CD8-positive, alpha-beta T cell (primary cell): ENCODE measurements at regions of chr5 and their contacts with region 1.

Region 1: GRCh38 chr5:36882250-36882649 is 5.7 kb downstream of the NIPBL start:
- DNase-seq: no peak
- ATAC-seq: no peak
- H3K4me3 ChIP-seq: no peak overlapping the region
- H3K4me3 Mint-ChIP-seq: peak overlapping the region; percentile 19
- H3K27ac ChIP-seq: no peak overlapping the region
- H3K27ac Mint-ChIP-seq: no peak overlapping the region
- H3K4me1 ChIP-seq: peaks cover 69% of the 10 kb centered on the region
- H3K4me1 Mint-ChIP-seq: peaks cover 75% of the 10 kb centered on the region
- H3K27me3 ChIP-seq: no peaks in the 10 kb centered on the region
- H3K27me3 Mint-ChIP-seq: no peaks in the 10 kb centered on the region
- CTCF ChIP-seq: no peak

Region 2: DNA sequence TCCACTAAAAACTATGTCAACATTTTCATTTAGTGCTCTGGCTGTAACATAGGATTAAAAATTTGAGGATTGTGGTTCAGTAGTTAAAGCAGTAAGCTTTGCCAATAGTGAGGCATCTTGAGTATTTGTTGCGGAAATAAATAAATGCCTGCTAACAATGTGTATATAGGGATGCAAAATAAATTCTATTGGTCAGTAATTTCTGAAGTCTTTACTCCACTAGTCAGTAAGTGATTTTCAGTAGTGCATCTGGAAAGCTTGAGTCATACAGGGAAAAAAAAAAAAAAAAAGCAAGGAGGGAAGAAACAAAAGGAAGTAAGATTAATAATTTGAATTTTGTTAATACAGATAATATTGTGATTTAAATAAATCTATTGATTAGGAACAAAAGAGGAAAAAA is 15.4 kb after region 1 on chr5:
- CTCF ChIA-PET with region 1: no interaction called
- POLR2A ChIA-PET with region 1: interaction called, 4 read pairs
- intact Hi-C with region 1: loop called in 1 of 2 experiments (anchors 2 kb)
- DNase-seq: no peak
- ATAC-seq: no peak
- H3K4me3 ChIP-seq: no peak overlapping the region
- H3K4me3 Mint-ChIP-seq: no peak overlapping the region
- H3K27ac ChIP-seq: no peak overlapping the region
- H3K27ac Mint-ChIP-seq: no peak overlapping the region
- H3K4me1 ChIP-seq: peaks cover 15% of the 10 kb centered on the region
- H3K4me1 Mint-ChIP-seq: peaks cover 72% of the 10 kb centered on the region
- H3K27me3 ChIP-seq: no peaks in the 10 kb centered on the region
- H3K27me3 Mint-ChIP-seq: no peaks in the 10 kb centered on the region
- CTCF ChIP-seq: no peak

Region 3: GRCh38 chr5:36928947-36929346 is 46.7 kb after region 1 on chr5:
- CTCF ChIA-PET with region 1: no interaction called
- POLR2A ChIA-PET with region 1: no interaction called
- intact Hi-C with region 1: loop called in 1 of 2 experiments (anchors 5 kb)
- DNase-seq: peak in 2 of 9 experiments; percentile 6 to 18
- ATAC-seq: no peak
- H3K4me3 ChIP-seq: no peak overlapping the region
- H3K4me3 Mint-ChIP-seq: no peak overlapping the region
- H3K27ac ChIP-seq: no peak overlapping the region
- H3K27ac Mint-ChIP-seq: no peak overlapping the region
- H3K4me1 ChIP-seq: peaks cover 18% of the 10 kb centered on the region
- H3K4me1 Mint-ChIP-seq: peaks cover 73% of the 10 kb centered on the region
- H3K27me3 ChIP-seq: no peaks in the 10 kb centered on the region
- H3K27me3 Mint-ChIP-seq: no peaks in the 10 kb centered on the region
- CTCF ChIP-seq: no peak

Region 4: DNA sequence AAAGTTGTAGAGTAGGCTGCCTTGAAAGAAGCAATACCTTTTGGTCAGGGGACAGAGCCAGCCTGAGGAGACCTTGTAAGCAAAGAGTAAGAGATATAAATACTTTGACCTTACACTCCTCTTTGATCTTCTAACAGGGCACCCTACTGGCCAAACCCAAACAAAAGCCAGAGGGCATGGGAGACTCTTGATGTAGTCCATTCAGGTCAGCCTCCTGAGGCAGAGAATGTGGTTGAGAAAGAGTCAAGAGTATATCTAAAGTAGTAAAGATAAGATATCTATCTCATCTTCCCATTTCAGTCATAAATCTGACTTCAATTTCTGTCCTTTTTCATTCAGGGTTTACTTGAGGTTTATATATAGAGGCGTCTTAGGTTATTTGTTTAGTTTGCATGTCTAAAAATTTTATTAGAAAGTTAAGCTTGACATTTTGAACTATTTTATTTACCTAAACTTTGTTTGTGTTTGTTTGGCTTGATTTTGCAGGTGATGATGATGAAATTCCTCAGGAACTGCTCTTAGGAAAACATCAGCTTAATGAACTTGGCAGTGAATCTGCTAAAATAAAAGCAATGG is 120.0 kb after region 1 on chr5:
- CTCF ChIA-PET with region 1: no interaction called
- POLR2A ChIA-PET with region 1: no interaction called
- intact Hi-C with region 1: no loop called
- DNase-seq: no peak
- ATAC-seq: no peak
- H3K4me3 ChIP-seq: no peak overlapping the region
- H3K4me3 Mint-ChIP-seq: no peak overlapping the region
- H3K27ac ChIP-seq: no peak overlapping the region
- H3K27ac Mint-ChIP-seq: peak overlapping the region; percentile 11
- H3K4me1 ChIP-seq: no peaks in the 10 kb centered on the region
- H3K4me1 Mint-ChIP-seq: no peaks in the 10 kb centered on the region
- H3K27me3 ChIP-seq: no peaks in the 10 kb centered on the region
- H3K27me3 Mint-ChIP-seq: no peaks in the 10 kb centered on the region
- CTCF ChIP-seq: no peak

Region 5: DNA sequence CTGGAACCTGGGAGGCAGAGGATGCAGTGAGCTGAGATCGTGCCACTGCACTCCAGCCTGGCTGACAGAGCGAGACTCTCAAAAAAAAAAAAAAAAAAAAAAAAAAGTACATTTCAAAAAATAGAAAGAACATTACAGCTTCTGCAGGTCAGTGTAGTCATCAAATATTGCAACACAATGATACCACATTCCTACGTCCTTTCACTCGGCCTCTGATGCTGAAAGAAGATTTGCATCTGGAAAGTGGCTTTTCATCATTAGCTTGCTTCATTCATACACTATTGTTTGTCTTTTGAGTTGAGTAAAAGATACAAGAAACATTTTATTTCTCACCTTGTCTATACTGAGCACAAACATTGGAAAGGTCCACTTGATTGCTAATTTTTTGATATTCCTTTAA is 426.5 kb after region 1 on chr5:
- CTCF ChIA-PET with region 1: no interaction called
- POLR2A ChIA-PET with region 1: no interaction called
- intact Hi-C with region 1: no loop called
- DNase-seq: no peak
- ATAC-seq: no peak
- H3K4me3 ChIP-seq: no peak overlapping the region
- H3K4me3 Mint-ChIP-seq: no peak overlapping the region
- H3K27ac ChIP-seq: no peak overlapping the region
- H3K27ac Mint-ChIP-seq: no peak overlapping the region
- H3K4me1 ChIP-seq: no peaks in the 10 kb centered on the region
- H3K4me1 Mint-ChIP-seq: no peaks in the 10 kb centered on the region
- H3K27me3 ChIP-seq: no peaks in the 10 kb centered on the region
- H3K27me3 Mint-ChIP-seq: no peaks in the 10 kb centered on the region
- CTCF ChIP-seq: no peak